Naive thymus-derived CD4-positive, alpha-beta T cell (primary cell): ENCODE measurements at regions of chr22 and their contacts with region 1.

Region 1: GRCh38 chr22:46006379-46007002 is 29.5 kb upstream of the WNT7B start:
- DNase-seq: peak; percentile 66 to 90 (median 82)
- ATAC-seq: peak; percentile 90
- H3K4me3 ChIP-seq: no peak overlapping the region
- H3K4me3 Mint-ChIP-seq: no peak overlapping the region
- H3K27ac ChIP-seq: no peak overlapping the region
- H3K27ac Mint-ChIP-seq: peak overlapping the region in 1 of 9 donors; percentile 59
- H3K4me1 ChIP-seq: peaks cover 4 to 5% of the 10 kb centered on the region in 2 donors
- H3K4me1 Mint-ChIP-seq: peaks cover 0 to 12% (median 4%) of the 10 kb centered on the region in 7 donors
- H3K27me3 ChIP-seq: peaks cover 0 to 3% of the 10 kb centered on the region in 2 donors
- H3K27me3 Mint-ChIP-seq: peaks cover 0 to 1% (median 0%) of the 10 kb centered on the region in 5 donors

Region 2: GRCh38 chr22:45994491-45995404 is 11.7 kb before region 1 on chr22:
- CTCF ChIA-PET with region 1: interaction called, 18 read pairs
- POLR2A ChIA-PET with region 1: no interaction called
- intact Hi-C with region 1: loop called in 1 of 2 experiments (anchors 1 kb)
- DNase-seq: peak; percentile 52 to 87 (median 69)
- ATAC-seq: peak; percentile 61
- H3K4me3 ChIP-seq: no peak overlapping the region
- H3K4me3 Mint-ChIP-seq: no peak overlapping the region
- H3K27ac ChIP-seq: no peak overlapping the region
- H3K27ac Mint-ChIP-seq: peak overlapping the region in 2 of 9 donors; percentile 30 to 64
- H3K4me1 ChIP-seq: peaks cover 0 to 6% of the 10 kb centered on the region in 2 donors
- H3K4me1 Mint-ChIP-seq: peaks cover 0 to 13% (median 3%) of the 10 kb centered on the region in 7 donors
- H3K27me3 ChIP-seq: no peaks in the 10 kb centered on the region
- H3K27me3 Mint-ChIP-seq: peaks cover 0 to 10% (median 4%) of the 10 kb centered on the region in 5 donors

Region 3: DNA sequence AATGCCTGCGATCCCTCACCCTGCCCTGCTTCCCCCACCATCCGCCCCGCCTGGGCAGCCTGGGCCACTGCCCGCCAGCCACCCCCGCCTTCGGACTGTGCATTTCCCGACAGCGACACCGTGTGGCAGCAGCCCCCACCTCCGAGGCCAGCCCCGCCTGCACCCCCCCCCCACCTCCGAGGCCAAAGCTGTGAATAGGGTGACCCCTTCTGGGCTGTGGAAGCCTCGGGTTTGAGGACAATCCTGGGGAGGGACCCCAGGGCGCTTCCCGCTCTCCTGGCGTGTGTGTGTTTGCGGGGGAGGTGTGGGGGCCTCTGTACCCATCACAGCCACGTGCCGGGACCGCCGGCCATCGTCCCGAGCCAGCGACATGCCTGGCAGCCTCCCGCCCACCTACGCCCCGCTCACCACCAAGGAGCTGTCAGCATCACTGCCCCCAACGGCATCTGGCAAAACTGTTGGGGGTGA is 110.0 kb after region 1 on chr22:
- CTCF ChIA-PET with region 1: interaction called, 112 read pairs
- POLR2A ChIA-PET with region 1: interaction called, 6 read pairs
- intact Hi-C with region 1: loop called (anchors 1 kb)
- DNase-seq: peak; percentile 58 to 87 (median 80)
- ATAC-seq: peak; percentile 98
- H3K4me3 ChIP-seq: no peak overlapping the region
- H3K4me3 Mint-ChIP-seq: no peak overlapping the region
- H3K27ac ChIP-seq: no peak overlapping the region
- H3K27ac Mint-ChIP-seq: no peak overlapping the region
- H3K4me1 ChIP-seq: peaks cover 0 to 4% of the 10 kb centered on the region in 2 donors
- H3K4me1 Mint-ChIP-seq: peaks cover 0 to 6% (median 0%) of the 10 kb centered on the region in 7 donors
- H3K27me3 ChIP-seq: no peaks in the 10 kb centered on the region
- H3K27me3 Mint-ChIP-seq: no peaks in the 10 kb centered on the region

Region 4: DNA sequence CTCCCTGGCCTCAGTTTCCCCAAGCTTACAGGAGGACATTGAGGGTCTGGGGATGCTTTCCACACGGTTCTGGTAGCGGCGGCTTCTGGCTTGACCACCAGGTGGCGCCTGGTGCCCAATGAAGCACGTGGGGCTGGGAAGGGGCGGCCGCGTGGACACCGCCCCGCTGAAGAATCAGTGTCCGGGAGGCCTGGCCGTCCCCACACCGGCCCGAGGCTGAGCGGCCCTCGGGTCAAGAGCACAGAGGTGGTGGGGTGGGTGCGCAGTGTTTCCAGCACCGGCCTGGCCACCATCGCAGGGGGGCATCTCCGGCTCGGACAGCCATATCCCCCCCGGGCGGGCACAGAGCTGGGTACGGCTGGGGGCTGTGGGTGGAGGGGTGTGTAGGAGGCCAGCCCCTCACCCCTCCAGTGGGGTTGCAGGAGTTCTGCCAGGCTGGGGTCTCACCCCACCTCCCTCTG is 116.0 kb after region 1 on chr22:
- CTCF ChIA-PET with region 1: interaction called, 112 read pairs
- POLR2A ChIA-PET with region 1: interaction called, 4 read pairs
- intact Hi-C with region 1: no loop called
- DNase-seq: peak; percentile 34 to 80 (median 57)
- ATAC-seq: peak; percentile 79
- H3K4me3 ChIP-seq: no peak overlapping the region
- H3K4me3 Mint-ChIP-seq: no peak overlapping the region
- H3K27ac ChIP-seq: no peak overlapping the region
- H3K27ac Mint-ChIP-seq: no peak overlapping the region
- H3K4me1 ChIP-seq: no peaks in the 10 kb centered on the region
- H3K4me1 Mint-ChIP-seq: no peaks in the 10 kb centered on the region
- H3K27me3 ChIP-seq: no peaks in the 10 kb centered on the region
- H3K27me3 Mint-ChIP-seq: no peaks in the 10 kb centered on the region

Region 5: DNA sequence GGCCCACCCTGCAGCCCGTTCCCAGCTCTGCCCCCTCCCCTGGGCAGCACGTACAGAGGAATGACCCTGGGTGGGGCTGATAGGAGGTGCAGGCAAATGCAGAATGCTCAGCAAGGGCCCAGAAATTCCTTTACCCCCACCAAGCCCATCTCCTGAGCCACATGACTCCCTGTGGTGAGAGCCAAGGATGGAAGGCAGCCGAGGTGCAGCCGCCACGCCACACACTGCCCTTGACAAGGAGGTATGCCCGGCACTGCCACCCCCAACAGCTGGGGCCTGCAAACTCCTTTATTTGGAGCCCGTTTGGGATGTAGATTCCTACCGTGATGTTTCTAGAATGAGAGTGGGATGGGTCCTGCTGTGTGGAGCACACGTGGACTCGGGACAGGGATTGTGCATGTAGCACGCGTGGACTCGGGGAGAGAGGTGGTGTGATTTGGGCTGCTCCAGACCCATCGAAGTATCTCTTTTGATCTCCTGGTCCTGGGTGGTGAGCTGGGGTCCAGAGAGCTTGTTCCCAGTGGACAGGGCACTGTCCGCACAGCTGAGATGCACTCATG is 303.1 kb after region 1 on chr22:
- CTCF ChIA-PET with region 1: interaction called, 4 read pairs
- POLR2A ChIA-PET with region 1: no interaction called
- intact Hi-C with region 1: loop called (anchors 5 kb)
- DNase-seq: no peak
- ATAC-seq: no peak
- H3K4me3 ChIP-seq: no peak overlapping the region
- H3K4me3 Mint-ChIP-seq: no peak overlapping the region
- H3K27ac ChIP-seq: no peak overlapping the region
- H3K27ac Mint-ChIP-seq: peak overlapping the region in 1 of 9 donors; percentile 86
- H3K4me1 ChIP-seq: no peaks in the 10 kb centered on the region
- H3K4me1 Mint-ChIP-seq: peaks cover 0 to 13% (median 0%) of the 10 kb centered on the region in 7 donors
- H3K27me3 ChIP-seq: no peaks in the 10 kb centered on the region
- H3K27me3 Mint-ChIP-seq: no peaks in the 10 kb centered on the region